Activated CD4-positive, alpha-beta T cell treated with anti-CD3 and anti-CD28 coated beads, Interleukin-2, amount 10 ng/mL, durations not matched to agents 24 days and 14 days (primary cell): ENCODE measurements at regions of chr7 and their contacts with region 1.

Region 1: GRCh38 chr7:35694781-35695472 is at the start of gene HERPUD2:
- DNase-seq: peak; percentile 97
- H3K4me3 Mint-ChIP-seq: peak within 1 kb of the TSS; percentile 94
- H3K27ac Mint-ChIP-seq: peak within 1 kb of the TSS; percentile 97
- H3K4me1 Mint-ChIP-seq: peaks cover 48% of the 10 kb centered on the region
- H3K27me3 Mint-ChIP-seq: no peaks in the 10 kb centered on the region
- total RNA-seq, gene HERPUD2: 20.3 and 20.4 TPM in 2 replicates

Region 2: DNA sequence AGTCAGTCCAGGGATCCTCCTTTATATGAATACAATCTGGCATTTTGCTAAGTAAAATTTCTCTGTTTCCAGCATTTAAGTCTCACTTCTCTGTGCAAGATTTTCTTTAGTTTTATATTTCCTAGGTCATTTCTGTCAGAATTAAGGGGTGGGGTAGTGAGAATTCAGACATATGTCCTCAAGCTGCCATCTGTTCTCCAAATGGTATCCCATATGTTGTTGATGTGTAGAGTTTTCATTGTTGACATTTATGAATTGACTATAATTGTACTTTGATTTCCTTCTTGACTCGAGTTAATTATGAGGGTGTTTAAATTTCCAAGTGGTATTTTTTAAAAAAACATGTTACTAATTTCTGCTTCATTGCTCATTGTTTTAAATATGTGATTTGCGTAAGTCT is 888.1 kb before region 1 on chr7:
- intact Hi-C with region 1: no loop called
- DNase-seq: no peak
- H3K4me3 Mint-ChIP-seq: no peak overlapping the region
- H3K27ac Mint-ChIP-seq: no peak overlapping the region
- H3K4me1 Mint-ChIP-seq: no peaks in the 10 kb centered on the region
- H3K27me3 Mint-ChIP-seq: no peaks in the 10 kb centered on the region

Region 3: GRCh38 chr7:35658602-35659201 is 36.2 kb before region 1 on chr7:
- intact Hi-C with region 1: loop called (anchors 5 kb)
- DNase-seq: no peak
- H3K4me3 Mint-ChIP-seq: no peak overlapping the region
- H3K27ac Mint-ChIP-seq: no peak overlapping the region
- H3K4me1 Mint-ChIP-seq: peaks cover 21% of the 10 kb centered on the region
- H3K27me3 Mint-ChIP-seq: no peaks in the 10 kb centered on the region

Region 4: DNA sequence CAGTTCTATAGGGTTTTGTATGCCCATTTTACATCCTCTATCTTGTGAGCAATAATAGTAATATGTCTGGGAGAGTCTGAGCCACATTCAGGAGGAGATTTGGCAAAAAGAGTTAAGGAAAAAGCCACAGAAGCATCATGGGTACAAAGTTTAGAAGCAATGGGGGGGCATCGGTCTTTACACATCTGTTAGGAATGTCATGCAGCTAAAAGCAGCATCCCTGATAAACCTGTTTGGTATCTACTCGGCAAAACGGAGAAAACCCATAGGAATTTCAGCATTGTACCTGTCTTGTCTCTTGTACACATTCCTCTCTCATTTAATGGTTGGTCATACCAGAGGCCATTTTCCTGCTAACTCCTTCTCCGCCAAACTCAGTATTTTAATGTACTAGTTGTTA is 12.5 kb after region 1 on chr7:
- intact Hi-C with region 1: loop called (anchors 1 kb)
- DNase-seq: no peak
- H3K4me3 Mint-ChIP-seq: no peak overlapping the region
- H3K27ac Mint-ChIP-seq: no peak overlapping the region
- H3K4me1 Mint-ChIP-seq: peaks cover 16% of the 10 kb centered on the region
- H3K27me3 Mint-ChIP-seq: peaks cover 9% of the 10 kb centered on the region

Region 5: DNA sequence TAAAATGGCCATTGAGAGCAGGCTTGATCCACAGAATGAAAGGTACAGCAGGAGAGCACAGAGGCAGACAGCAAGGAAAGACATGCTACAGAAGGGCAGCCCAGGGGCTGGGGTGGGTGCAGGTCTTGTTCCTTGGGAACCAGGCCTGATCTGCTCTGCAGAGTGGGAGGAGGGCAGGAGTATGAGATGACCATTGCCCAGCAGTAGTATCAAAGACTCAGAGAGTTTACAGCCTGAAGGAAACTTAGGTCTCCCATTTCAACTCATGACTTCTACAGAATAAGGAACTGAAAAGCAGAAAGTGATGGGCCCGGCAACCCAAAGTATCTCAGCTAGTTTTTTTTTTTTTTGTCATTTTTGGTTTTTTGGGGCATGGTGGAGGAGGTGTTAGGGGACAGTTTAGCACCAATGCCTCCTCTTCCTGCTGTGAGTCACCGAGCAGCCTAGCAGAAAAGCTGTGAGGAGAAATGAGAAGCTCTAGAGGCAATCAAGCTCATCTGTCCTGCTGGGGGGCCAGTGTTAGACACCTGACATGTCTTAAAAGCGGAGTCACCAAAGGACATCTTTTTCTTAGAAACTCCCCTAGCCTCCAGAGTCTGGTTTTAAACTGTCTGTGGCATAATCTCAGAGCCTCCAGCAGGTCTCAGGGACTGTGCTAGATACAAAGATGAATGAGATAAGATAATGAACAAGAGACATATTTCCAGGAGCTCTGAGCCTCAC is 34.3 kb after region 1 on chr7:
- intact Hi-C with region 1: loop called (anchors 1 kb)
- DNase-seq: peak; percentile 74
- H3K4me3 Mint-ChIP-seq: peak overlapping the region; percentile 39
- H3K27ac Mint-ChIP-seq: peak overlapping the region; percentile 48
- H3K4me1 Mint-ChIP-seq: peaks cover 44% of the 10 kb centered on the region
- H3K27me3 Mint-ChIP-seq: peaks cover 11% of the 10 kb centered on the region

Region 6: GRCh38 chr7:35777121-35777520 is 82.2 kb after region 1 on chr7:
- intact Hi-C with region 1: no loop called
- DNase-seq: no peak
- H3K4me3 Mint-ChIP-seq: no peak overlapping the region
- H3K27ac Mint-ChIP-seq: no peak overlapping the region
- H3K4me1 Mint-ChIP-seq: no peaks in the 10 kb centered on the region
- H3K27me3 Mint-ChIP-seq: peaks cover 2% of the 10 kb centered on the region

Region 7: GRCh38 chr7:35906191-35906908 is 211.4 kb after region 1 on chr7:
- intact Hi-C with region 1: loop called (anchors 5 kb)
- DNase-seq: peak; percentile 91
- H3K4me3 Mint-ChIP-seq: no peak overlapping the region
- H3K27ac Mint-ChIP-seq: no peak overlapping the region
- H3K4me1 Mint-ChIP-seq: no peaks in the 10 kb centered on the region
- H3K27me3 Mint-ChIP-seq: no peaks in the 10 kb centered on the region

Region 8: DNA sequence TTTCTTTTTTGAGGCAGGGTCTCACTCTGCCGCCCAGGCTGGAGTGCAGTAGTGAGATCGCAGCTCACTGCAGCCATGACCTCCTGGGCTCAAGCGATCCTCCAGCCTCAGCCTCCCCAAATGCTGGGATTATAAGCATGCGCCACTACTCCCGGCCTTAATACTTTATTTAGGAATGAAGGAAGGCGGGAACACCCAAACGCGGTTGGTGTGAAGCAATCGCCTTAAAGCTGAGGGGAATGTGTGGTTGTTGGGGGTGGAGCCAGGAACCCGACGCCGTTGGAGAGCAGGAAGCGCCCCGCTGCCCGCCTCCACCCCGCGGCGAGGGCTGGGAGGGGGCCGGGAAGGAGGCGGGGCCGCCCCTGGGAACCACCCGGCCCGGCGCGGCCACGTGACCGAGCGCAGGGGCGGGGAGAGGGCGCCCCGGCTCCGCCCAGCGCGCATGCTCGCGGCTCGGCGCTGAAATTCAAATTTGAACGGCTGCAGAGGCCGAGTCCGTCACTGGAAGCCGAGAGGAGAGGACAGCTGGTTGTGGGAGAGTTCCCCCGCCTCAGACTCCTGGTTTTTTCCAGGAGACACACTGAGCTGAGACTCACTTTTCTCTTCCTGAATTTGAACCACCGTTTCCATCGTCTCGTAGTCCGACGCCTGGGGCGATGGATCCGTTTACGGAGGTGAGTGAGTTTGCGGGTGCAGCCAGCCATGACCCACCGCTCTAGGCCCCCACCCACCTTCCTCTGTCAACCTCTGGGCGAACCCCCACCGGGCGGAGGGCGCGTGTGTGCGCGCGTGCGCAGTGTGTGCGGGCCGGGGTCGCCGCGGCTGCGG is 694.7 kb after region 1 on chr7 and contains the start of gene ANLN:
- intact Hi-C with region 1: loop called (anchors 2 kb)
- DNase-seq: peak; percentile 97
- H3K4me3 Mint-ChIP-seq: peak within 1 kb of the TSS; percentile 92
- H3K27ac Mint-ChIP-seq: peak within 1 kb of the TSS; percentile 85
- H3K4me1 Mint-ChIP-seq: peaks cover 33% of the 10 kb centered on the region
- H3K27me3 Mint-ChIP-seq: peaks cover 12% of the 10 kb centered on the region
- total RNA-seq, gene ANLN: 35.6 and 35.9 TPM in 2 replicates